Naive thymus-derived CD8-positive, alpha-beta T cell (primary cell): ENCODE measurements at regions of chr1 and their contacts with region 1.

Region 1: GRCh38 chr1:167627865-167628641 is 2.0 kb upstream of the RCSD1 start:
- DNase-seq: peak; percentile 48 to 84 (median 68)
- ATAC-seq: peak; percentile 79 to 83
- H3K4me3 Mint-ChIP-seq: peak overlapping the region; percentile 66 to 96 (median 92)
- H3K27ac Mint-ChIP-seq: peak overlapping the region; percentile 56 to 100 (median 96)
- H3K4me1 Mint-ChIP-seq: peaks cover 34 to 82% (median 70%) of the 10 kb centered on the region in 4 donors
- H3K27me3 Mint-ChIP-seq: no peaks in the 10 kb centered on the region

Region 2: GRCh38 chr1:167599957-167600581 is 28.0 kb before region 1 on chr1:
- POLR2A ChIA-PET with region 1: interaction called, 315 read pairs
- DNase-seq: peak in 9 of 10 donors; percentile 20 to 72 (median 39)
- ATAC-seq: peak; percentile 82 to 87
- H3K4me3 Mint-ChIP-seq: peak overlapping the region in 9 of 10 donors; percentile 52 to 78 (median 68)
- H3K27ac Mint-ChIP-seq: peak overlapping the region in 9 of 10 donors; percentile 1 to 90 (median 41)
- H3K4me1 Mint-ChIP-seq: peaks cover 23 to 47% (median 44%) of the 10 kb centered on the region in 4 donors
- H3K27me3 Mint-ChIP-seq: no peaks in the 10 kb centered on the region

Region 3: DNA sequence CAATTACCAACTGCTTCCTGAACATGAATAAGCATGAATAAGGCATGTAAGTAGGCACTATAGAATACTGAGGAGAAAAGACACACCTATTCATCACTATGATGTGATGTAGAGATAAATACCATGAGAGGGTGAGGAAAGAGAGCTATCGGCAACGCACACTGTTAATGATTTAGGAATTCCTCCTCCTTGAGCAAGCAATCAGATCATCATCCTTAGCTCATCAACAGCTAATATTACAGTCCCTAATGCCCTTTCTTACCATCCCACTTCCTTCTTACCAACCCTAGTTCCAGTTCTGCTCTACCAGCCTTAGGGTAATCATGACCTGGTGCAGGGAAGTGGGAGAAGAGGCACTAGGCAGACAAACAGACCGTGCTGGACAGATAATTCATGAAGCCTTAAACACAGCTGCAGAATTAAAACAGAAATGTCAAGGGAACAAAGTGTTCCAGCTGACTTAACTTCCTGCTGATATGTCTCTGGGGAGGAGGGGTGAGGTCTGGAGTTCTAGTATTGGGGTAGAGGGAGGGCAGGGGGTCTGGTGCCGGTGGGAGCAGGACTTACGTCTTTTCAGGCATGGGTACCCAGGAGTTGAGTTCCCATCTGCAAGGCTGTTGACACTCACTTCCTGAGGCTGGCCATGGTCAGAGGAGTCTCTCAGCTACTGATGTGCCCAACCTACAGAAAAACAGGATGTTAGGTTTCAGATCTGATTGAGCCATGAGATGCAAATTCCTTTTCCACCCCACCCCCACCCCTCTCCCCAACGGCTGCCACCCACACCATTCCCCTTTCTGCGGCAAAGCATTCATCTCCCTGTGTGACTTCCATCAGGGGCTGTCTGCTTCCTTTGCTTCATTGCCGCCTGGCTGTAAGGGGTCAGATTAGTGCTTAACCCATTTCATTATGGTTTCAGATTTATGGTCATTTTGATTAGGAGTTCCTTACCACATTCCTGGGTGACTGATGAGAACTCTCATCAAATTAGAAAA is 10.6 kb before region 1 on chr1:
- POLR2A ChIA-PET with region 1: interaction called, 276 read pairs
- DNase-seq: peak in 3 of 10 donors; percentile 14 to 68 (median 49)
- ATAC-seq: peak; percentile 57 to 80
- H3K4me3 Mint-ChIP-seq: peak overlapping the region; percentile 47 to 85 (median 79)
- H3K27ac Mint-ChIP-seq: peak overlapping the region; percentile 81 to 99 (median 91)
- H3K4me1 Mint-ChIP-seq: peaks cover 48 to 86% (median 66%) of the 10 kb centered on the region in 4 donors
- H3K27me3 Mint-ChIP-seq: no peaks in the 10 kb centered on the region

Region 4: DNA sequence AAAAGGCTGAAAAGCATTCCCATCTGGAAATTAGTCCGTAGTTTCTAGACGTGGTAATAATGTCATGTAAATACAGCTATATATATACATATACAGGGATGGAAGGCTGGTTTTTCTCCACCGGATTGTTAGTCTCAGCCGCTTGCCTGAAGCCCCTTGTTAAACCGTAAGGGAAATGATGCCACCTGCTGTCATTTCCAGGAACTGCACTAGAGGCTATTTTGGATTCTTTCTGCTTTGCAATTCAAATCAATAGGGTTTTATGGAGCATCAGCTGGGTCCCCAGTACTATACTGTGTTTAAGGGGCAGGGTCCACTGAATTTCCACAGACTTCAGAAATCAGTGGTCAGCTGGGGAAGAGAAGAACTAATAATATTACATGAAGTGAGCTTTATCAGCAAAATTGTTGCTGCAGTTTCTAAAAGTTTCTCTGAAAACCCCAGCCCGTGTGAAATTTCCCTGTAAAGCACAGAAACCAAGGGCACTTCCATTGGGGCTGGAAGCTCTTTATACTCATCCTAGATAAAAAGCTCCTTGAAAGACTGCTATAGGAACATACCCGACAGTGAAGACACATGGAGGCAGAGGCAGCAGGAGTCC is 60.0 kb after region 1 on chr1:
- POLR2A ChIA-PET with region 1: interaction called, 10 read pairs
- DNase-seq: peak; percentile 57 to 87 (median 77)
- ATAC-seq: peak; percentile 75 to 83
- H3K4me3 Mint-ChIP-seq: peak overlapping the region in 2 of 10 donors; percentile 23 to 45
- H3K27ac Mint-ChIP-seq: peak overlapping the region; percentile 29 to 89 (median 72)
- H3K4me1 Mint-ChIP-seq: peaks cover 15 to 38% (median 30%) of the 10 kb centered on the region in 4 donors
- H3K27me3 Mint-ChIP-seq: no peaks in the 10 kb centered on the region

Region 5: GRCh38 chr1:167715157-167715999 is 87.3 kb after region 1 on chr1:
- POLR2A ChIA-PET with region 1: interaction called, 13 read pairs
- DNase-seq: peak; percentile 58 to 95 (median 88)
- ATAC-seq: peak; percentile 56 to 60
- H3K4me3 Mint-ChIP-seq: peak overlapping the region; percentile 82 to 99 (median 94)
- H3K27ac Mint-ChIP-seq: peak overlapping the region; percentile 80 to 100 (median 92)
- H3K4me1 Mint-ChIP-seq: peaks cover 24 to 39% (median 38%) of the 10 kb centered on the region in 4 donors
- H3K27me3 Mint-ChIP-seq: peaks cover 0 to 9% (median 0%) of the 10 kb centered on the region in 5 donors